ENCODE measurements at regions of chr5 and their contacts with region 1.

Region 1: GRCh38 chr5:88660947-88661805 is 221.8 kb downstream of the MEF2C start:
- DNase-seq: peak; percentile 97
- H3K4me3 ChIP-seq: peak overlapping the region; percentile 46
- CTCF ChIP-seq: no peak

Region 2: DNA sequence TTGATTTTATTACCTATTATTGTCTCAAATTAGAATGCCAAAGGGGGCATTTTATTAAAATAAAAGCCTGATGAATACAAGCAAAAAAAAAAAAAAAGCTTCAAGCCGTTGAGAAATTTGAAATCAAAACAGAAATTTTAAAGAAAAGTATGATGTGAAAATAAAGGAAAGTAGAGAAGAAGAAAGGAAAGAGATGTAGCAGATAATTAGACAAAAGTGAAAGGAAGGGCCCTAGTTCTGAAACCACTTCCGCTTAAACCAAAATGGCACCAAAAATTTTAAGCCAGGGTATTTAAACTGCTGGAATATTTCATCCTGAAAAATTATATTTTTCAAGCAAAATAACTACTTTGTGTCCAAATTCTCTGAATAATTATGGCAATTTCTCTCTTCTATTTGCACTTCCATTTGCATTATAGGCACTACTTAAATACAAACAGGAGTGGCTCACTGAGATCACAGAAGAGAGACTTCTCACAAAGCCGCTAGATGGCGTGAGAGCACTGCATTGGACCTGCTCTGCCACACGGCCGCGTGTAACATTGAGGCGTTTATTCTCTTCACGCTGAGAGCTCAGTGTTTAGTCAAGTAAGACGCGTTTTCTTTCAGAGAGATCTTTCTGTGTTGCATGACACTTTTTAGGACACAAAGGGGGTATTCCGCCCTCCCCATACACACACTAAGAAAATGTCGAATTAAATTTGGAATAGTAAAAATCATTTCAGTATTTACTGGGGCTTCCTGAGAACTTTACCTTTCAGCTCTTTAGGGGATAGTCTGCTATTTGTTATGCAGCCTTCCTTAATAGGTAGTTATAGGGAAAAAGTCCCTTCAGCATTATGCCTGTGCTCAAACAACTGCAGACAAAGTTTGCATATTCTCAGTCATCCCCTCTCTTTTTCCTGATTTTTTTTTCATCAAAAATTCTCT is 880.1 kb before region 1 on chr5:
- in situ Hi-C with region 1: loop called (anchors 10 kb)
- DNase-seq: peak; percentile 90
- H3K4me3 ChIP-seq: no peak overlapping the region
- CTCF ChIP-seq: peak; percentile 85

Region 3: DNA sequence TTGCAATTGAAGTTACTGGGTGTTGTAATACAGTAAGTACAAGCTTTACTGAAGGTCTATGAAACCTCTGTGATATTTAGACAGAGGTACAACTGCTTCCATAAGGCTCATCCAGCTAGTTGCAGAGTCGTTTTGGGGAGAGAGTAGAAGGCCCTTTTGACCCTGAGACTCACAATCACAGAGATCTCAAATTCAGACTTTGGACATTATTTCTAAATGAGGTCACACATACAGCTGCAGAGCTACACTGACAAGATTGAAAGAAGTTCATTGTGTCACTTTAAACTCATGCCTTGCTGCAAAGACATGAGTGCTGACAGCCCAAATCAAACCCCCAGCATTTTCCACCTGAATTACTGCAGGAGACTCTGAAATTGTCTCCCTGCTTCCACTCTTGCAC is 186.6 kb before region 1 on chr5:
- in situ Hi-C with region 1: no loop called
- DNase-seq: no peak
- H3K4me3 ChIP-seq: no peak overlapping the region
- CTCF ChIP-seq: no peak

Region 4: DNA sequence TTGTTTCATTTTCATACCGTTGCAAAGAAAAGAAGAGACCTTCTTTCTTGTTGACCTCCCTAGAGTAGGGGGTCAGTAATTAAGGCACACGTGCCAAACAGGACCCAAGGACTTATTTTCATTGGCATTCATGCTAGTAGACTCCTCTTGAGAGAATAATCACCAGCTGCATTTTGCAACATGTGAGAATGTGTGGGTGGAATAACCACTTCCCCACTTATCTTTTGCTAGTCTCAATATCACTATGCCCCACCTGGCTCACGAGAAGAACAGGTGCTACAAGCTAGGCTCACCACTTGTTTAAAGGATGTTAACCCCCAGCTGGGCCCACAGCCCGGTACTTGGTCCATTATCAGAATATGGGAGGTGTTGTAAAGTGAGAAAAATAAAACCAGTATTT is 682.5 kb after region 1 on chr5:
- in situ Hi-C with region 1: no loop called
- DNase-seq: peak; percentile 29
- H3K4me3 ChIP-seq: no peak overlapping the region
- CTCF ChIP-seq: no peak

Measured in astrocyte of the spinal cord (primary cell).